ENCODE measurements at regions of chr1 and their contacts with region 1.

Region 1: GRCh38 chr1:237864338-237865244 is 26.1 kb downstream of the ZP4 start:
- DNase-seq: peak; percentile 45
- CTCF ChIP-seq: peak; percentile 79

Region 2: DNA sequence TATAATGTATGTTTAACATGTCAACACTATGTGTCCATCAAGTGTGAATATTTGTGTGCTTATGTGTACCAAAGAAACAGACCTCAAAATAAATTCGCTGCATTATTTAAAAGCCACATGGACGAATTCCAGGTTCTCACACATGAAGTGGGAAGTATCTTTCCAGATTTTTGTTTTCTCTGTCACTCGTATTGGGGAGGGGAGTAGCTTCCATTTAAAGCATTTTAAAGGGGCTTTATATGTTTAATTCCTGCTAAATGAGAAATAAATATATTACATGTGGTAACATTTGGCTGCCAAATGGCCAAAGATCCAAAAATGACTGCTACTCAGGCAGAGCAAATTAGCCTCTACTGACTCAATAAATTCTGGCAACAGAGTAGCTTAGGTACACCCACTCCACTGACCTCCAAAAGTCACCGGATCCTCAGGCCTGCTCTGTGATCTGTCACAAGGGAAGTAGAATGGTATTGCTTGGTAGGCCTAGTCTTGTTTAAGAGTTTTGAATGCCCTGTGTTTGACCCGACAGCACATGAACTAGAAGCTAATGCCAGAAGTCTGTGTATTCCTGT is 151.9 kb before region 1 on chr1:
- CTCF ChIA-PET with region 1: no interaction called
- POLR2A ChIA-PET with region 1: no interaction called
- DNase-seq: no peak
- CTCF ChIP-seq: no peak

Region 3: DNA sequence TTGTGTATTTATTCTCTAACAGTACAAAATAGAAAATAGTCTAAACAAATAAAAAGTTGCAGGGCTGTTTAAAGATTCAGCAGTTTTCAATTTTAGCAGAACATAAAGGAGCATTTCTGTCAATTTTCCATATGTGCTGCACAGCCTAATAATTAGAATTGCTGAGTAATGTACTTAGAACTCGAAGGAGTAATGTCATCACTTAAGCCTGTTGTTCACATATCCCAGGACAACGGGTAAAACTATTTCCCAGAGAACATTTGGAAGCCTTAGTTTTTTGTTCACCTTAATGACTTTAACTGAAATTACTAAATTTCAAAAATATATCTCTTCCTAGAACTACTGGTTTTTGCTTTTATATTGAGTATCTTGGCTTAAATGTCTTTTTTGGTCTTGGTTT is 55.5 kb before region 1 on chr1:
- CTCF ChIA-PET with region 1: interaction called, 11 read pairs
- POLR2A ChIA-PET with region 1: no interaction called
- DNase-seq: no peak
- CTCF ChIP-seq: no peak

Region 4: DNA sequence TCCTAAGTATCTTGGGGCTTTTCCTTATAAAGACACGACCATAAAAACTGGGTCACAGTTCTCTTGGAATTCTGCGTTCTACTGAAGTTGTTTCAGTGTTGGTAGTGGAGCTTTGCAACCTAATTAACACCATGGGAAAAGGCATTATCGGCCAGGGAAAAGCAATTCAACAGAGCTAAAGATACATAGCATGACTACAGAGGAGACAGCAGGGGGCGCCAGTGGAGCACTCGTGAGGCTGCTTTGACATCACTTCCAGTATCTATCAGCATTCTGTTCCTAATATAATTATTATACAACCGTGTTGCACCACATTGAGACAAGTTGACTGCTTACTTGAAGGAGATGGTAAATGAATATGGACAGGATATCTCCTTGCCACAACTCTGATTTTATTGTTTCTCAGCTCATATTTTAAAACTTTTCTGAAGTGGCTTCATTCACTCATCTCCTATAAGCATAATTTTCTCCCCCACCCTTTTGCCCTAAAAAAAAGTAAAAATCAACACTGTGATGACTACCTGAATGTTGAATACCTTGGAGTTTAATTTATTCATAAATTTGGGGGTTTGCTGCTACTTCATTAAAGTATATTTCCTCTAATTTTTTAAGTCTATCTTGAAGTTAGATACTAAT is 13.3 kb before region 1 on chr1:
- CTCF ChIA-PET with region 1: interaction called, 49 read pairs
- POLR2A ChIA-PET with region 1: no interaction called
- DNase-seq: peak; percentile 19
- CTCF ChIP-seq: peak; percentile 40

Measured in GM10248 (cell line).